Activated CD8-positive, alpha-beta T cell treated with anti-CD3 and anti-CD28 coated beads for 36 hours (primary cell): ENCODE measurements at regions of chr6 and their contacts with region 1.

Region 1: GRCh38 chr6:154675602-154676088 is 57.6 kb upstream of the SCAF8 start:
- DNase-seq: peak; percentile 95
- ATAC-seq: peak; percentile 100
- H3K4me3 Mint-ChIP-seq: no peak overlapping the region
- H3K27ac Mint-ChIP-seq: no peak overlapping the region
- H3K4me1 Mint-ChIP-seq: no peaks in the 10 kb centered on the region
- H3K27me3 Mint-ChIP-seq: no peaks in the 10 kb centered on the region
- CTCF ChIP-seq: peak; percentile 99

Region 2: GRCh38 chr6:154733012-154733625 is 57.5 kb after region 1 on chr6 and contains the start of gene SCAF8:
- CTCF ChIA-PET with region 1: interaction called, 8 read pairs
- POLR2A ChIA-PET with region 1: no interaction called
- intact Hi-C with region 1: loop called (anchors 5 kb)
- DNase-seq: peak; percentile 80
- ATAC-seq: peak; percentile 74
- H3K4me3 Mint-ChIP-seq: peak within 1 kb of the TSS; percentile 83
- H3K27ac Mint-ChIP-seq: peak within 1 kb of the TSS; percentile 88
- H3K4me1 Mint-ChIP-seq: peaks cover 39% of the 10 kb centered on the region
- H3K27me3 Mint-ChIP-seq: no peaks in the 10 kb centered on the region
- CTCF ChIP-seq: peak; percentile 79
- total RNA-seq, gene SCAF8: 31.3 to 32.9 TPM

Region 3: DNA sequence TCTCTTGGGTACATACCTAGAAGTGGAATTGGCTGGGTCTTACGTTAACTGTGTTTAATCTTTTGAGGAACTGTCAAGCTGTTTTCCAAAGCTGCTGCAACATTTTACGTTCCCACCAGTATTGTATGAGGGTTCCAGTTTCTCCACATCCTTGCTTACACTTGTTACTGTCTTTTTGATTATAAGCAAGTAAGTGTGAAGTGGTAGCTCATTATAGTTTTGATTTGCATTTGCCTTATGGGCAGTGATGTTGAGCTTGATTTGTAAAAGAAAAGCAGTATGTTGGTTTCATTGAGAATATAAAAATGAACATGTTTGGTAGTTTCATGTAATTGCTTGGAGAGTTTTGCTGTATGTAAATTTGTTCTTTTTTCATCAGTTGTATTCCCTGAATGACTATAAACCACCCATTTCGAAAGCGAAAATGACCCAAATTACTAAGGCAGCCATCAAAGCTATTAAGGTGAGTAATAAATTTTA is 98.0 kb after region 1 on chr6:
- CTCF ChIA-PET with region 1: interaction called, 10 read pairs
- POLR2A ChIA-PET with region 1: no interaction called
- intact Hi-C with region 1: no loop called
- DNase-seq: no peak
- ATAC-seq: peak; percentile 72
- H3K4me3 Mint-ChIP-seq: peak overlapping the region; percentile 32
- H3K27ac Mint-ChIP-seq: peak overlapping the region; percentile 80
- H3K4me1 Mint-ChIP-seq: peaks cover 45% of the 10 kb centered on the region
- H3K27me3 Mint-ChIP-seq: no peaks in the 10 kb centered on the region
- CTCF ChIP-seq: no peak

Region 4: DNA sequence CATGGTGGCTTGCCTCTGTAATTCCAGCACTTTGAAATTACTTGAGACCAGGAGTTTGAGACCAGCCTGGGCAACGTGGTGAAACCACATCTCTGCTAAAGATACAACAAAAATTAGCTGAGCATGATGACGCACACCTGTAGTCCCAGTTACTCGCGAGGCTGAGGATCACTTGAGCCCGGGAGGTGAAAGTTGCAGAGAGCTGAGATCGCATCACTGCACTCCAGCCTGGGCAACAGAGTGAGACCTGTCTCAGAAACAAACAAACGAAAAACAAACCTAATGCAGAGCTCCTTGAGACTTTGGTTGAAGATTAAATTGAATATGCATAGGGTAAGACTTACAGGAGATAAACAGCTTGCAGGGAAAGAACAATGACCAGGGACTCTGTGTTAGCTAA is 138.4 kb after region 1 on chr6:
- CTCF ChIA-PET with region 1: interaction called, 233 read pairs
- POLR2A ChIA-PET with region 1: no interaction called
- intact Hi-C with region 1: no loop called
- DNase-seq: no peak
- ATAC-seq: no peak
- H3K4me3 Mint-ChIP-seq: no peak overlapping the region
- H3K27ac Mint-ChIP-seq: no peak overlapping the region
- H3K4me1 Mint-ChIP-seq: peaks cover 2% of the 10 kb centered on the region
- H3K27me3 Mint-ChIP-seq: no peaks in the 10 kb centered on the region
- CTCF ChIP-seq: no peak

Region 5: GRCh38 chr6:154909821-154910220 is 234.2 kb after region 1 on chr6:
- CTCF ChIA-PET with region 1: interaction called, 11 read pairs
- POLR2A ChIA-PET with region 1: no interaction called
- intact Hi-C with region 1: no loop called
- DNase-seq: no peak
- ATAC-seq: no peak
- H3K4me3 Mint-ChIP-seq: no peak overlapping the region
- H3K27ac Mint-ChIP-seq: no peak overlapping the region
- H3K4me1 Mint-ChIP-seq: peaks cover 8% of the 10 kb centered on the region
- H3K27me3 Mint-ChIP-seq: no peaks in the 10 kb centered on the region
- CTCF ChIP-seq: no peak